Activated CD8-positive, alpha-beta T cell treated with anti-CD3 and anti-CD28 coated beads for 36 hours (primary cell): ENCODE measurements at regions of chr12 and their contacts with region 1.

Region 1: GRCh38 chr12:31406345-31406744 is 80.4 kb upstream of the SINHCAF start:
- DNase-seq: no peak
- ATAC-seq: no peak
- H3K4me3 Mint-ChIP-seq: no peak overlapping the region
- H3K27ac Mint-ChIP-seq: no peak overlapping the region
- H3K4me1 Mint-ChIP-seq: no peaks in the 10 kb centered on the region
- H3K27me3 Mint-ChIP-seq: peaks cover 2% of the 10 kb centered on the region
- CTCF ChIP-seq: no peak

Region 2: DNA sequence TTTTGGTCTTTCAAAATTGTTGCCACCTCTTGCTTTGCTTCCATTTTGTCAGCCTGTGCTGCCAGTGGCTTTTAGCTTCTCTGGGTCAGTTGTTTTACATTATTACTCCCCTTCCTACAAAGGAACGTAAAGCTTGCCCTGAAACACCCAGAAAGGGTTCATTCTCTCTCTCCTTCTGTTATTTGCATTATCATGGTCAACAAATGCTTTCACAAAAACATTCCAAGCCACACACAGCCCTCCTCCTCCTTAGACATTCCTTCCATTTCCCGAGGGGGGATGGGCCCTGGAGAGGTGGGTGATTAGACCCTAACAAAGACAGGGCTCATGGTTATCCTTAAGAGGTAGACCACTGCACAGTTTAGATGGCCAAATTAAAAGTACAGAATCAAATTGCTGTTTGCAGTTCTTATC is 20.0 kb before region 1 on chr12:
- CTCF ChIA-PET with region 1: interaction called, 10 read pairs
- POLR2A ChIA-PET with region 1: no interaction called
- intact Hi-C with region 1: no loop called
- DNase-seq: no peak
- ATAC-seq: no peak
- H3K4me3 Mint-ChIP-seq: no peak overlapping the region
- H3K27ac Mint-ChIP-seq: no peak overlapping the region
- H3K4me1 Mint-ChIP-seq: no peaks in the 10 kb centered on the region
- H3K27me3 Mint-ChIP-seq: peaks cover 3% of the 10 kb centered on the region
- CTCF ChIP-seq: no peak

Region 3: DNA sequence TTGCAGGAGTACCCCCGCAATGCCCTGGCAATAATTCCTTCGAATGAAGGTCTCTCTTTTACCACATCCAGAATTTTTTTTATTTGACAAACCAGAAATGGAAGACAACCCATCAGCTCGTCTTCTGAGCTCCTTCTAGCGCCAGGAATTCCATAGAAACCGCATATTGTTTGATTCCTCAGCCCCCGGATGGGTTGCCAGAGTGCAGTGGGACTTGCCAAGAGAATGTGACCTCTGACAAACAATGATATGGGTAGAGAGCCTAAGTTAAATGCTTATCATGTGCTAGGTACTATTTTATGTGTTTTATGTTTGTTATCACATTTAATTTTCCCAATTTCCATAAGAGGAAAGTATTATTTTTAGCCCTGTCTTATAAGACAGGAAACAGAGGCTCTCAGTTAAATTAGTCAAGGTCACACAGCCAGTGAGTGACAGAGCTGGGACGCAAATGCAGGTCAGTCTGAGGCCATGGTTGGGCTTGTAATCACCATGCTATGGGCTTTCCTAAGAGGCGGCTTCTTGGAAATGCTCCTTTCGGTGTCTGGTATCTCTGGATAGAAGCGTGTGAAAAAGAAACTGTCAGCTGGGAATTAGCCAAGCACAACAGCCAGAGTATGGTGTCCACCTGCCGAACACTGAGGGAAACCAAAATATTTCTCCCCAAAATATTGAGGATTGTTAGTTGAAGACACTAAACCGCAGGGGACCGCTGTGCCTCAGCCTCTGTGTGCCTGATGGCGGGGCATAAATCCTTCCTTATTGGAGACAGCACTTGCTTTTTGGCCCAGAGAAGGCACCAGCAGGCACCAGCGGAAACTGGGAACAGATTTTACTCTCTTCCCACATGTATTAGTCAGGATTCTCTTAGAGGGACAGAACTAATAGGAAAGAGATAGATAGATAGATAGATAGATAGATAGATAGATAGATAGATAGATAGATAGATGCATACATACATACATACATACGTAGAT is 223.7 kb after region 1 on chr12:
- CTCF ChIA-PET with region 1: interaction called, 10 read pairs
- POLR2A ChIA-PET with region 1: no interaction called
- intact Hi-C with region 1: no loop called
- DNase-seq: no peak
- ATAC-seq: no peak
- H3K4me3 Mint-ChIP-seq: no peak overlapping the region
- H3K27ac Mint-ChIP-seq: no peak overlapping the region
- H3K4me1 Mint-ChIP-seq: no peaks in the 10 kb centered on the region
- H3K27me3 Mint-ChIP-seq: no peaks in the 10 kb centered on the region
- CTCF ChIP-seq: no peak

Region 4: GRCh38 chr12:31644536-31644935 is 238.2 kb after region 1 on chr12:
- CTCF ChIA-PET with region 1: interaction called, 16 read pairs
- POLR2A ChIA-PET with region 1: no interaction called
- intact Hi-C with region 1: no loop called
- DNase-seq: no peak
- ATAC-seq: no peak
- H3K4me3 Mint-ChIP-seq: no peak overlapping the region
- H3K27ac Mint-ChIP-seq: no peak overlapping the region
- H3K4me1 Mint-ChIP-seq: no peaks in the 10 kb centered on the region
- H3K27me3 Mint-ChIP-seq: no peaks in the 10 kb centered on the region
- CTCF ChIP-seq: no peak

Region 5: GRCh38 chr12:31651893-31652521 is 245.7 kb after region 1 on chr12:
- CTCF ChIA-PET with region 1: interaction called, 12 read pairs
- POLR2A ChIA-PET with region 1: no interaction called
- intact Hi-C with region 1: no loop called
- DNase-seq: no peak
- ATAC-seq: no peak
- H3K4me3 Mint-ChIP-seq: peak overlapping the region; percentile 24
- H3K27ac Mint-ChIP-seq: no peak overlapping the region
- H3K4me1 Mint-ChIP-seq: peaks cover 12% of the 10 kb centered on the region
- H3K27me3 Mint-ChIP-seq: no peaks in the 10 kb centered on the region
- CTCF ChIP-seq: no peak